Colonic mucosa (tissue), 4 donors: ENCODE measurements at regions of chr1 and their contacts with region 1.

Region 1: GRCh38 chr1:204363335-204364124 is 3.8 kb upstream of the PLEKHA6 start:
- DNase-seq: peak; percentile 90
- H3K4me3 ChIP-seq: peak overlapping the region; percentile 8
- H3K27ac ChIP-seq: peak overlapping the region; percentile 42
- H3K4me1 ChIP-seq: peaks cover 10% of the 10 kb centered on the region
- H3K27me3 ChIP-seq: no peaks in the 10 kb centered on the region
- CTCF ChIP-seq: peak; percentile 98

Region 2: GRCh38 chr1:203861379-203862184 is 501.9 kb before region 1 on chr1 and contains the start of gene SNRPE:
- intact Hi-C with region 1: loop called (anchors 10 kb)
- DNase-seq: peak; percentile 96
- H3K4me3 ChIP-seq: peak within 1 kb of the TSS; percentile 85
- H3K27ac ChIP-seq: peak within 1 kb of the TSS; percentile 65
- H3K4me1 ChIP-seq: peaks cover 10% of the 10 kb centered on the region
- H3K27me3 ChIP-seq: no peaks in the 10 kb centered on the region
- CTCF ChIP-seq: peak; percentile 92
- total RNA-seq, gene SNRPE: 86.1 to 146 TPM

Region 3: DNA sequence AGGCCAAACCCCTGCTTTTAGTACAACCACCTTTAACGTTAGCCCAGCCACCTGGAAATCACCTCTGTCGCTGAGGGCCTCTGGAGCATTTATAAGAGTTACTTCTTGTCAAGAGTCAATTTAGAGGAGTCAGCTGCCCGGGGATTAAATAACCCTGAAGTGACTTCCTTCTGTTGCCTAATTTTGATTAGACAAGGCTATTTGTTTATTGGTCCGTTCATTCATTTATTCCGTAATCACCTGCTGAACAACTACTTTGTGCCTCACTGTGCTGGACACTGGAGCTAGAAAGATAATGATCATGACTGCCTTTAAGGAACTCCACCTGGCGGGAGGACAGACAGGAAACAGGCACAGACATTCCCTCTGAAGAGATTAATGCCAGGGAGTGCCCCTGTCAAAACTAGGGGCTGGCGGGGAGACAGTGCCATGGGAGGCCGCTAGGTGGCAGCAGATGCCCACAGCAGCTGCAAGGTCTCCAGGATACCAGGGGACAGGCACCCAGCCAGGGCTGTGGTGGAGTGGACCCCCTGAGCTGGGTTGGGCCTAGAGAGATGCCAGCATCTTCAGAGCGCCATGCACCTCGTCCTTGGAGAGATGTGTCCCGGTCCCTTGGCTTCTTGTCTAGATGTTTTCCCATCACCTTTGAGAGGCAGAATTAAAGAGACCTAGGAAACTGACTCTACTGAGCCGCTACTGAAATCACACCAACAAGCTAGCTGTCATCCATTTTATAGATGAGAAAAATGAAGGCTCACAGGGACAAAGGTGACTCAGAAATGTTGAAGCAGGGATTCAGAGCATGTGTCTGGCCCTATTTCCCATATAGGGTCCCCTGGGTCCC is 201.1 kb before region 1 on chr1:
- intact Hi-C with region 1: loop called (anchors 2 kb)
- DNase-seq: peak; percentile 85
- H3K4me3 ChIP-seq: no peak overlapping the region
- H3K27ac ChIP-seq: no peak overlapping the region
- H3K4me1 ChIP-seq: peaks cover 3% of the 10 kb centered on the region
- H3K27me3 ChIP-seq: no peaks in the 10 kb centered on the region
- CTCF ChIP-seq: peak; percentile 100

Region 4: DNA sequence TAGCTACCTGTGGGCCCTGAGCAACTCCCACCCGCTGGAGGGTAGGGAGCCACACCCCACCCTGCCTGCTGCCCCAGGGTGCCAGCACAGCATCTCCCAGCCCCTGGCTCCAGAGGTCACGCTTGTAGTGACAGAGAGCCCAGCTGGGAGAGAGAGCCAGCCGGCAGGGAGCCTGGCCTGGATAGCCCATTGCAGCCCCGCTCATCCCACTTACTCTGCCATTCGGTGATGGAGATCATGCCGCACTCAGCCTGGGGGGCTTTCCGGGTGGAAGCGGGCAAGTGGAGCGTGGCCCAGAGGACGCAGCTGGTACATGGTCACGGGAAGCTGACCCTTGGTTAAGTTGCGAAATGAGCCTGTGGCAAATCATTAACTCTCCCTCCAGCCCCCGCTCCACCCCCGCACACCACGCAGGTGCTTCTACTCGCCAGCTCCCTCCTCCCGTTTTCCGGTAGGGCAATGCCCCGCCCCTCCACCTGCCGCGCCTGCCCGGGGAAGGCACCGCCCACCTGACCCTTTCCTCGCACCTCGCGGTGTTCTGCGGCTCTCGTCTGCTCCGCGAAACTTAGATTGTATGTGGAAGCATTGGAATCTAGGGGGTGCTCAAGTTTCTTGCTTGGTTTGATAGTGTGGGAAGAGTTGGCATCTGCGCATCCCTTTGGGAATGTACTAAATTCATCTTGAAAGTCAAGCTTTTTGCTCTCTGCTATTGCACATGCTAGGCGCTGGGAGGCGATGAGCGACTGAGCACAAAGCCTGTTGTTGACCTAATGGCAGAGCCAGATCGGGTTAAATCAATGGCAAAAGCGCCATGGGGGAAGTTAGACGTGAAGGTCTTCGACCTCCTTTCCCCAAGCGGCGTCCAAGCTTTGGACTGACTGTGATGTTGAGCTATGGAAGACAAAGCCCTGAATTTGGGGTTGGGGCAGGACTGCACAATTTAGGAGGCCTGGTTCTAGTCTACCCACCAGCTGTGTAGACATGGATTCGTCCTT is 149.6 kb before region 1 on chr1 and contains the start of gene GOLT1A:
- intact Hi-C with region 1: loop called (anchors 5 kb)
- DNase-seq: peak; percentile 93
- H3K4me3 ChIP-seq: peak within 1 kb of the TSS; percentile 18
- H3K27ac ChIP-seq: peak within 1 kb of the TSS; percentile 24
- H3K4me1 ChIP-seq: no peaks in the 10 kb centered on the region
- H3K27me3 ChIP-seq: no peaks in the 10 kb centered on the region
- CTCF ChIP-seq: peak; percentile 34
- total RNA-seq, gene GOLT1A: 6.7 to 13.6 TPM

Region 5: DNA sequence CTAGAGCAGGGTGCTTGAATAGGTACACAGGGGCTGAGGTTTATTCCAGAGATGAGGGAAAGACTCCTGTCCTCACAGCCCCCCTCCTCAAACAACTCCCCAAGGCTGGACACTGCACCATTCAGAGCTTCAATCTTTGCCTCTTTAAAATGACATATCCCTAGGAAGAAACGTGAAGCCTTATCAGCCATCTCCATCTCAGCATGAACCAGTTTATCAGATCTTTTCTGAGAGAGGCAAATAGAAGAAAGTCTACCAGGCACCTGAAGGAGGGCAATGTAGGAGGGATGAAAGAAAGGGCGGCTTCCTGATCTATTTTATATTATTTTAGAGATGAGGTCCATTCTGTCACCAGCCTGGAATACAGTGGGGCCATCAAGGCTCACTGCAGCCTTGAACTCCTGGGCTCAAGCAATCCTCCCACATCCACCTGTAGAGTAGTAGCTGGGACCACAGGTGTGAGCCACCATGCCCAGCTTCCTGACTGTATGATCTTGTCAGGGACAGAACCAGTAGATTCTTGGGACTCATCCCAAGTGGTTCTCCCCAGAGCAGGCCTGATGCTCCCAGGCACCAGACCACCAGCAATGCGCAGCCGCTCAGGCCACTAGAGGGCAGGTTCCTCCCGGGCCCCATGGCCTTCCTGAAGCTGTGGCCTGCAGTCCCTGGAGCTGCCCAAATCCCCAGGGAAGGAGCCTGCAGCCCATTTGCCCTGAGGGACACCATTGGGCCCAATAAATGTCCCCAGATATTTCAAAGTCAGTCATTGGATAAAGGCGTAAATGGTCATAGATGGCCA is 105.4 kb before region 1 on chr1:
- intact Hi-C with region 1: loop called (anchors 2 kb)
- DNase-seq: peak; percentile 52
- H3K4me3 ChIP-seq: no peak overlapping the region
- H3K27ac ChIP-seq: no peak overlapping the region
- H3K4me1 ChIP-seq: peaks cover 4% of the 10 kb centered on the region
- H3K27me3 ChIP-seq: no peaks in the 10 kb centered on the region
- CTCF ChIP-seq: peak; percentile 69

Region 6: GRCh38 chr1:204307334-204307883 is 56.1 kb before region 1 on chr1:
- intact Hi-C with region 1: no loop called
- DNase-seq: no peak
- H3K4me3 ChIP-seq: no peak overlapping the region
- H3K27ac ChIP-seq: no peak overlapping the region
- H3K4me1 ChIP-seq: no peaks in the 10 kb centered on the region
- H3K27me3 ChIP-seq: no peaks in the 10 kb centered on the region
- CTCF ChIP-seq: no peak

Region 7: DNA sequence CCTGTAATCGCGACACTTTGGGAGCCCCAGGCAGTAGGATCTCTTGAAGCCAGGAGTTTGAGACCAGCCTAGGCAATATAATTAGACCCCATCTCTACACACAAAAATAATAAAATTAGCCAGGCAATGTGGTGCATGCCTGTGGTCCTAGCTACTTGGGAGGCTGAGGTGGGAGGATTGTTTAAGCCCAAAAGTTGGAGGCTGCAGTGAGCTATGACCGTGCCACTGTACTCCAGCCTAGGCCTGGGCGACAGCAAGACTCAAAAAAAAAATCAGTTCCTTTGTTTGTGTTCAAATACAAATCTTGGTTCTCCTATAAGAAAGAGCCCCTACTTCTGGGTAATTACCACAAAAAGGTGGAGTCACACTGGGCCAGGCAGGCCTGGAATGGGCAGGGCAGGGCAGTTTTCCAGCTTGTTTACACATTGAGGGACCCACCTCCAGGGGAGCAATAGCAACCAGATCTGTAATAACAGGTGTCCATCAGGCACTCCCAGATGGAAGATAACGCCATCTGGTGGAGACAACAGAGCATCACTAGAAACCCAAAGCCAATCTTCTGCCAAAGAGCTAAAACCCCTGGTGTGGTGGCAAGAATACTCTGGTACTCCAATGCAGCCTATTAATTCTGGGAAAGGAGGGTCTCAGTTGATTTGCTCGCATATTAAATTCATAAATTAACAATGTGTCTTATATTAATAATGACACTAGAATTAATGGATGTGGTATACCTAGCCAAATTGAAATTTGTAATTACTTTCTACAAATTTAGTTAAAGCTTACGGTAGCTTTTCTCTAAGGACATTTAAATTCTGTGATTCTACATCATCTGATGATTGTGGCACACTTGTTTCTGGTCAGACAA is 34.9 kb after region 1 on chr1:
- intact Hi-C with region 1: loop called (anchors 5 kb)
- DNase-seq: peak; percentile 94
- H3K4me3 ChIP-seq: no peak overlapping the region
- H3K27ac ChIP-seq: peak overlapping the region; percentile 53
- H3K4me1 ChIP-seq: no peaks in the 10 kb centered on the region
- H3K27me3 ChIP-seq: no peaks in the 10 kb centered on the region
- CTCF ChIP-seq: peak; percentile 80

Region 8: DNA sequence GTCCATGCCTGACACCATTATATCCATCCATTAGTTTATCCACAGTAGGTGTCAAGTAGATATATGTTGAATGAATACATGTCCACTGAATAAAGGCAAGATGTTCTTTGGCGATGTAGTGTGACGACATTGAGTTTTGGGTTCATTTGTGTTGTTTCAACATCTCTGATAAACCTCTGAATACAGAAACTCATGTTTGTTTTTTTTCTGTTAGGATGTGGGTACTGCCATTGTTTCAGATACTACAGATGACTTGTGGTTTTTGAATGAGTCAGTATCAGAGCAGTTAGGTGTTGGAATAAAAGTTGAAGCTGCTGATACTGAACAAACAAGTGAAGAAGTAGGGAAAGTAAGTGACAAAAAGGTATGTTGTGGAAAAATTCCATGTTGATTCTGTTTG is 180.8 kb after region 1 on chr1:
- intact Hi-C with region 1: no loop called
- DNase-seq: no peak
- H3K4me3 ChIP-seq: no peak overlapping the region
- H3K27ac ChIP-seq: no peak overlapping the region
- H3K4me1 ChIP-seq: no peaks in the 10 kb centered on the region
- H3K27me3 ChIP-seq: no peaks in the 10 kb centered on the region
- CTCF ChIP-seq: no peak